ENCODE measurements at regions of chr5 and their contacts with region 1.

Region 1: GRCh38 chr5:17189381-17190036 is 27.9 kb upstream of the BASP1 start:
- DNase-seq: peak; percentile 83
- H3K4me3 Mint-ChIP-seq: no peak overlapping the region
- H3K27ac Mint-ChIP-seq: no peak overlapping the region
- H3K4me1 Mint-ChIP-seq: peaks cover 29% of the 10 kb centered on the region
- H3K27me3 Mint-ChIP-seq: no peaks in the 10 kb centered on the region
- CTCF ChIP-seq: peak; percentile 87

Region 2: GRCh38 chr5:16666883-16667398 is 522.6 kb before region 1 on chr5:
- CTCF ChIA-PET with region 1: interaction called, 18 read pairs
- POLR2A ChIA-PET with region 1: no interaction called
- intact Hi-C with region 1: no loop called
- DNase-seq: peak; percentile 36
- H3K4me3 Mint-ChIP-seq: no peak overlapping the region
- H3K27ac Mint-ChIP-seq: no peak overlapping the region
- H3K4me1 Mint-ChIP-seq: no peaks in the 10 kb centered on the region
- H3K27me3 Mint-ChIP-seq: no peaks in the 10 kb centered on the region
- CTCF ChIP-seq: peak; percentile 34

Region 3: DNA sequence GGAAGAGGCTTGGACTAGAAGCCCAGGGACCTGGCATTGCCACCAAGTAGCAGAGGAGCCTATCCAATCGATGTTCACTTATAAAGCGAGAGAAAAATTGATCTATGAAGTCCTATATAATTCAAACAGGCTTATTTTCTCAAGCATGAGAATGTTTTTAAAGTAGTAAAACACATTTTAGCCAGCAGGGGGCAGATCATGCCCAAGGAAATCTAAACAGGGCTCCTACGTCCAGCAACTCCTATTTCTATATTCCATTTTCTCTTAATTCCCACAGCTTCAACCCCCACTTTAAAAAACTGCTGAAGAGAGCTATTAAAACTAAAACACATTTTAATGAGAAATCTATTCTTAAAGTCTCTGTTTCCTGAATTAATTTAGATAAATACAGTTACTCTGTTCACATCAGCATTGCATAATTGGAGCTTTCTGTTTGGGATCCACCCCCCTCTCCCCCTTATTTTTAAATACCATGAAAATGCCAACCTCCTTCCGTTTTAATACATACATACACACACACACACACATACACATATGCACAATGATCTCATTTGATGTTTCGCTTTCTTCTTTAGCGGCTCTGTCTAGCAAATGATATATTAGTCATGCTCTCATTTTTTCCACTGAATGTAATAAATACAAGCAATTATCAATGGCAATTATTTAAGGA is 398.3 kb before region 1 on chr5:
- CTCF ChIA-PET with region 1: interaction called, 120 read pairs
- POLR2A ChIA-PET with region 1: interaction called, 7 read pairs
- intact Hi-C with region 1: loop called (anchors 1 kb)
- DNase-seq: peak; percentile 63
- H3K4me3 Mint-ChIP-seq: no peak overlapping the region
- H3K27ac Mint-ChIP-seq: no peak overlapping the region
- H3K4me1 Mint-ChIP-seq: peaks cover 31% of the 10 kb centered on the region
- H3K27me3 Mint-ChIP-seq: no peaks in the 10 kb centered on the region
- CTCF ChIP-seq: peak; percentile 52

Region 4: DNA sequence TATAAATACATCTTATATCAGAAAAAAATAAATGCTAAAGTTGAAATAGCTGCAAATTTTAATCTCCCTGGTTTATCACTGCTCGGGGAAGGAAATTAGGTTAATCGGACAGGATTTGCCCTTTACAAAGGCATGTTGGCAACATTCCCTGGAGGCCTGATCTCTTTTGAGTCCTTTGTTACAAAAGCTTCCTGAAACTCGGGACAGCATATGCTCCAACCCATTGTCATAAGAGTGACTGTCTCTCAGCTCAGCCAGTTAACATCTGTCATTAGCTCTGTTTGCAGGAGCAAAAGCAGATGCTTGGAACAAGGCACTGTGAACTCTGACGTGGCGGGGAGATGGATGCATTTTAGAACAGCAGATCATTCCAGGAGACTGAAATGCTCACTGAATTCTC is 334.0 kb before region 1 on chr5:
- CTCF ChIA-PET with region 1: interaction called, 16 read pairs
- POLR2A ChIA-PET with region 1: no interaction called
- intact Hi-C with region 1: no loop called
- DNase-seq: no peak
- H3K4me3 Mint-ChIP-seq: no peak overlapping the region
- H3K27ac Mint-ChIP-seq: no peak overlapping the region
- H3K4me1 Mint-ChIP-seq: peaks cover 10% of the 10 kb centered on the region
- H3K27me3 Mint-ChIP-seq: no peaks in the 10 kb centered on the region
- CTCF ChIP-seq: no peak

Region 5: DNA sequence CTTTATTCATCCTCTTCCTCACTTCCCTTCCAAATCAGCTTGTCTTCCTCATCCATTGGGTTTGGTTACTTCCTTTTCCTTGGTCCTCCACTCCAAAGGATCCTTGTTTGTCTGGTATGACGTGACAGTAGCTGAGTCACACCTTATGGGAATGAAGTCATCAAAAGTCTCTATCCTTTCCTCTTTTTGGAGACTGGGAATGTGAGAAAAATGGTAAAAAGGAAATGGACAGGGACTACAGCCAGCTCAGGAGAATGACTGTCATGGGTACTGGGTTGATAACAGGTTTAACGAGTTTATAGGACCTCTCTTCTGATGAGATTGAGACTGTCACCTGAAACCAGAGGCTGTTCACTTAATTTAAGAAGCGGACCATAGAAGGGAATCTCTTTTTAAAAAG is 177.2 kb before region 1 on chr5:
- CTCF ChIA-PET with region 1: no interaction called
- POLR2A ChIA-PET with region 1: no interaction called
- intact Hi-C with region 1: loop called (anchors 10 kb)
- DNase-seq: peak; percentile 28
- H3K4me3 Mint-ChIP-seq: no peak overlapping the region
- H3K27ac Mint-ChIP-seq: no peak overlapping the region
- H3K4me1 Mint-ChIP-seq: peaks cover 6% of the 10 kb centered on the region
- H3K27me3 Mint-ChIP-seq: no peaks in the 10 kb centered on the region
- CTCF ChIP-seq: no peak

Region 6: DNA sequence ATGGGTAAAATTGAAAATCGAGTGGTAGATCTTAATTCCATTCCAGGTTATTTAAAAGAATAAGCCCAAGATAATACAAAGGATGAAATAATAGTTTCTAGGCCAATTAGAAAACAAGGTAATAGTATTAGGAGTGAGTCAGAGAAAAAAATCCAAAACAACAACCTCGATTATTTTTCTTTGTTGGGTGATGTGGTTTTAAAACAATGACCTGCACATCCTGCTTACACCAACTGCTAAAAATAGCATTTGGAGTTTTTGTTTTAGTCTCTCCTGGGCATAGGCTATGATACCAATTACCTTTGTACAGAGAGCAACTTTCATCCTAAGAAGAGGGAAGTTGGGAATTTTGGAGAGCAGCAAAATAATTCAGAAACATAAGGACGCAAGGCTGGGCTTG is 151.8 kb before region 1 on chr5:
- CTCF ChIA-PET with region 1: no interaction called
- POLR2A ChIA-PET with region 1: no interaction called
- intact Hi-C with region 1: no loop called
- DNase-seq: peak; percentile 28
- H3K4me3 Mint-ChIP-seq: no peak overlapping the region
- H3K27ac Mint-ChIP-seq: no peak overlapping the region
- H3K4me1 Mint-ChIP-seq: peaks cover 6% of the 10 kb centered on the region
- H3K27me3 Mint-ChIP-seq: no peaks in the 10 kb centered on the region
- CTCF ChIP-seq: no peak

Region 7: GRCh38 chr5:17157916-17158529 is 31.5 kb before region 1 on chr5:
- CTCF ChIA-PET with region 1: interaction called, 18 read pairs
- POLR2A ChIA-PET with region 1: no interaction called
- intact Hi-C with region 1: no loop called
- DNase-seq: peak; percentile 72
- H3K4me3 Mint-ChIP-seq: no peak overlapping the region
- H3K27ac Mint-ChIP-seq: peak overlapping the region; percentile 25
- H3K4me1 Mint-ChIP-seq: peaks cover 31% of the 10 kb centered on the region
- H3K27me3 Mint-ChIP-seq: no peaks in the 10 kb centered on the region
- CTCF ChIP-seq: no peak

Region 8: DNA sequence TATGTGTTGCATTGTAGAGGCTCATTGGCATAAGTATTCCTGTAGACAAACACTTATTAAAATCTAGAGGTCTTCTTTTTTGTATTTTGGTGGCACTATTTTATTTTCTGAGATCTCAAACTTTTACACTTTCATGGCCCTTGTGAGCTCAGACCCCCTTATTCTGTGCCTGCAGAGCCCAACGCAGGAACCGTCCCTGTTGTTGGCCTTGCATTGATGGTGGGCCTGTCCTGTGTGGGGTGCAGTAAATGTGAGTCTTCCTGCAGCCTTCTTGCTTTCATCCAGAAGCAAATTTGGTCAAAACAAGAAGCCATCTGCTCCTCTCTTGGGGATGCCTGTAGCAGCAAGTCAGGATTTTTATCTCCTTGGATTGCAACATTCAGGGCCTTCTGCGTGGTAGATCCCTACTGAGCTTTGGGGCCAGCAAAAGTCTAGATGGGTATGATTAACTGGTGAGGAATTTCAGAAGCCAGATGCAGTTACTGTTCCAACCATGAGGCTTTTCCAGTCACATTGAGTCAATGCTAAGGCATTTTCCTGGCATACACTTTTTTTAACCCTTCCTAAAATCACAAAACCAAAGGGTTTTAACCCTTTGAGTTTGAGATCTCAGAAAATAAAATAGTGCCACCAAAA is 59.6 kb after region 1 on chr5:
- CTCF ChIA-PET with region 1: no interaction called
- POLR2A ChIA-PET with region 1: no interaction called
- intact Hi-C with region 1: no loop called
- DNase-seq: peak; percentile 96
- H3K4me3 Mint-ChIP-seq: peak overlapping the region; percentile 54
- H3K27ac Mint-ChIP-seq: peak overlapping the region; percentile 92
- H3K4me1 Mint-ChIP-seq: peaks cover 38% of the 10 kb centered on the region
- H3K27me3 Mint-ChIP-seq: no peaks in the 10 kb centered on the region
- CTCF ChIP-seq: peak; percentile 19